Heart right ventricle (tissue), 16 donors: ENCODE measurements at regions of chr20 and their contacts with region 1.

Region 1: GRCh38 chr20:30949761-30950160 is 307.7 kb upstream of the DEFB115 start:
- DNase-seq: peak in 1 of 2 donors; percentile 3
- ATAC-seq: no peak
- H3K4me3 ChIP-seq: no peak overlapping the region
- H3K27ac ChIP-seq: no peak overlapping the region
- H3K4me1 ChIP-seq: no peaks in the 10 kb centered on the region
- H3K27me3 ChIP-seq: no peaks in the 10 kb centered on the region
- CTCF ChIP-seq: no peak

Region 2: DNA sequence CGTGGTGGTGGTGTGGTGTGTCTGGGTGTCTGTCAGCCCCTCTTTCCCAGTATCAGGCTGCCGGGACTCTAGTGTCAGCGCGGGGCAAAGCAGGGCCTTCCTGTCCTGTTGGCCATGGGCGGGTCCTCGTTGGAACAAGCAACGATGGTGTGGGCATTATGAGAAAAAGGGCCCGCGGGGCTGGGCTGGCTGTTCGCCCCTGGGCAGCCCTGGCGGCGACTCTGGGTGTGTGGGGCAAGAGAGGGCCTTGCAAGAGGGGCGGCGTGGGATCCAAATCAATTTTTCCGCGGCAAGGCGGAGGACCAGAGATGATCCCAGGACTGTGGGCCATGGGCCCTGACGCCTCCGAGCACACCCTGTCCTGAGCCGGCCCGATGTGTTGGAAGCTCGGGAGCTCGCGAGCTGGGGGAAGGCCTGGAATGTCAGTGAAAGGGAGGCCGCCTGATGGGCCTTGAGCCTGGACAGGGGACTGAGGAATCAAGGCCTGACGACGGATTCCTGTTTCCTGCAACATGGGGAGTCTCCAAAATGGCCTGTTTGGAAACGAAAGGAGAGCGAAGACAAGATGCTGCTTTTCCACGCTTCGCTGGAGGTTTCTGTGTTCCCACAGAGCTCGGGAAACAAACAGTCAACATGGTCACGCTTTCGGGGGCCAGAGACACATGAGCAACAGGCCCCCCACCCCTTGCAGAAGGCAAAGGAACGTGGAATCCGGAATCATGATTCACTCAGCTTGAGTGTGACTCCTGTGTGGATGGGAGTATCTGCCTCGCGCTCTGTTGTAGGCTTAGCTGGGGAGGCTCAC is 57.0 kb before region 1 on chr20:
- intact Hi-C with region 1: loop called in 1 of 10 experiments (anchors 10 kb)
- DNase-seq: no peak
- ATAC-seq: no peak
- H3K4me3 ChIP-seq: no peak overlapping the region
- H3K27ac ChIP-seq: no peak overlapping the region
- H3K4me1 ChIP-seq: peaks cover 0 to 5% (median 0%) of the 10 kb centered on the region in 9 donors
- H3K27me3 ChIP-seq: peaks cover 7 to 82% (median 55%) of the 10 kb centered on the region in 7 donors
- CTCF ChIP-seq: no peak